Activated CD8-positive, alpha-beta T cell treated with anti-CD3 and anti-CD28 coated beads, Interleukin-2, amount 10 ng/mL, durations not matched to agents 7 days and 5 days (primary cell): ENCODE measurements at regions of chr20 and their contacts with region 1.

Region 1: GRCh38 chr20:44609511-44610312 is 27.3 kb downstream of the PKIG start:
- DNase-seq: peak; percentile 87
- ATAC-seq: peak; percentile 93
- H3K4me3 Mint-ChIP-seq: peak overlapping the region; percentile 22
- H3K27ac Mint-ChIP-seq: peak overlapping the region; percentile 92
- H3K4me1 Mint-ChIP-seq: peaks cover 21% of the 10 kb centered on the region
- H3K27me3 Mint-ChIP-seq: no peaks in the 10 kb centered on the region

Region 2: DNA sequence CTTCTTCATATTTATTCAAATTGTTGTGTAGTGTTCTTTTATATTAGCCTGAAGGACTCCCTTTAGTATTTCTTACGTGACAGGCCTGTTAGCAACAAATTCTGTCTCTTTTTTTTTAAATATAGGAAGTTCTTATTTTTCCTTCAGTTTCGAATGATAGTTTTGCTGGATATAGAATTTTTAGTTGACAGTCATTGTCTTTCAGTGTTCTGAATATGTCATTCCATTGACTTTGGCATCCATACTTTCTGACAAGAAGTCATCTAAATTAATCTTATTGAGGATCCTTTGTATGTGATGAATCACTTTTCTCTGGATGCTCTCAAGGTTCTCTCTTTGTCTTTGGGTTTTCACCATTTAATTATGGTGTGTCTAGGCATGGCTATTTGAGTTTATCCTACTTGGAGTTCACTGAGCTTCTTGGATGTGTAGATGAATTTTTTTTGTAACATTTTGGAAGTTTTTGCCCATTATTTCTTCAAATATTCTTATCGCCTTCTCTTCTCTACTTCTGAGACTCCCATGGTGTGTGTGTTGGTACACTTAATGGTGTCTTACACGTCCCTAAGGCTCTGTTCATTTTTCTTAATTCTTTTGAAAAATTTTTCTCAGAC is 800.4 kb before region 1 on chr20:
- CTCF ChIA-PET with region 1: no interaction called
- POLR2A ChIA-PET with region 1: no interaction called
- DNase-seq: no peak
- ATAC-seq: no peak
- H3K4me3 Mint-ChIP-seq: no peak overlapping the region
- H3K27ac Mint-ChIP-seq: no peak overlapping the region
- H3K4me1 Mint-ChIP-seq: no peaks in the 10 kb centered on the region
- H3K27me3 Mint-ChIP-seq: peaks cover 12% of the 10 kb centered on the region

Region 3: GRCh38 chr20:44388466-44389023 is 221.2 kb before region 1 on chr20:
- CTCF ChIA-PET with region 1: interaction called, 31 read pairs
- POLR2A ChIA-PET with region 1: no interaction called
- DNase-seq: peak; percentile 78
- ATAC-seq: peak; percentile 86
- H3K4me3 Mint-ChIP-seq: no peak overlapping the region
- H3K27ac Mint-ChIP-seq: no peak overlapping the region
- H3K4me1 Mint-ChIP-seq: peaks cover 6% of the 10 kb centered on the region
- H3K27me3 Mint-ChIP-seq: peaks cover 2% of the 10 kb centered on the region

Region 4: GRCh38 chr20:44475694-44476560 is 133.8 kb before region 1 on chr20 and contains the start of gene TTPAL:
- CTCF ChIA-PET with region 1: interaction called, 14 read pairs
- POLR2A ChIA-PET with region 1: interaction called, 3 read pairs
- DNase-seq: peak; percentile 91
- ATAC-seq: peak; percentile 100
- H3K4me3 Mint-ChIP-seq: peak within 1 kb of the TSS; percentile 94
- H3K27ac Mint-ChIP-seq: peak within 1 kb of the TSS; percentile 99
- H3K4me1 Mint-ChIP-seq: peaks cover 20% of the 10 kb centered on the region
- H3K27me3 Mint-ChIP-seq: peaks cover 2% of the 10 kb centered on the region
- total RNA-seq, gene TTPAL: 18.0 to 18.4 TPM

Region 5: DNA sequence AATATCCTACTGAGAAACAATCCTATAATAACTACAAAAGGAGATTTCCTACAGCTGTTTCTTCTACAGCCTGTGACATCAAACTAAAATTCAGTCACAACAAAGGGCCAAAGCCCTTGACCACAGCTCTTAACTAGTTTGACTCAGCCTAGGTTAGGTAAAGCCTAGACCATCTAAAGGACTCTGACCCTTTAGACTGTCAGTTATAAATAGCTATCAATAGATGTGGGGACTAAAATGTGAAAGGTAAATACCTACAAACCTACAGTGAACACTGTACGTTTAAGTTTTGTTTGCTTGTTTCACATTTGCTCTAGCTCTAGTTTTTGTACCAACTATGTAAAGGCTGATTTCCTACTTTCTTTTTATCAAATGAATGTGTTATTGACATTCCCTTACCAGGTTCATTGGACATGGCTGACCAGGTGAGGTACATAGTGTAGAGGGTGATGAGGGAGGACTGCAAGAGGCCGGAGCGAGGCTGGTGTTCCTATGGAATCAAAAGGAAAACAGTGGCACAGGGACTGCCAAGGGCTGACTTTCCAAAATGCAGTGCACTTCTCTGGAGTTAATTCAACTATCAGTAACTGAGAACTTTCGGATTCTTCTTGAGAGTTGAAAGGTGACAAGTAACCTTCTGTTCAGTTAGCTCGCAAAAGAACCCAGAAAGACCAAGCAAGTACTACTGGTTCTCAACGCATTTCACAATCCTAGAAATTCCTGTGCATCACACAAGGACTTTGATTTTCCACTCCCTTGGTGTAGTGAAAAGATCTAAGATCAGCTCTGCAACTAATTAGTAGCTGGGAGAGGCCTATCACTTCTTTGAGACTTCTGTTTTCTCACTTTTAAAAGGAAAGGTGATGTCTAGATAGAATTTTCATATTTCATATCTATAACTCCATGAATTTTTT is 105.1 kb before region 1 on chr20:
- CTCF ChIA-PET with region 1: interaction called, 13 read pairs
- POLR2A ChIA-PET with region 1: no interaction called
- DNase-seq: no peak
- ATAC-seq: no peak
- H3K4me3 Mint-ChIP-seq: no peak overlapping the region
- H3K27ac Mint-ChIP-seq: no peak overlapping the region
- H3K4me1 Mint-ChIP-seq: no peaks in the 10 kb centered on the region
- H3K27me3 Mint-ChIP-seq: no peaks in the 10 kb centered on the region

Region 6: DNA sequence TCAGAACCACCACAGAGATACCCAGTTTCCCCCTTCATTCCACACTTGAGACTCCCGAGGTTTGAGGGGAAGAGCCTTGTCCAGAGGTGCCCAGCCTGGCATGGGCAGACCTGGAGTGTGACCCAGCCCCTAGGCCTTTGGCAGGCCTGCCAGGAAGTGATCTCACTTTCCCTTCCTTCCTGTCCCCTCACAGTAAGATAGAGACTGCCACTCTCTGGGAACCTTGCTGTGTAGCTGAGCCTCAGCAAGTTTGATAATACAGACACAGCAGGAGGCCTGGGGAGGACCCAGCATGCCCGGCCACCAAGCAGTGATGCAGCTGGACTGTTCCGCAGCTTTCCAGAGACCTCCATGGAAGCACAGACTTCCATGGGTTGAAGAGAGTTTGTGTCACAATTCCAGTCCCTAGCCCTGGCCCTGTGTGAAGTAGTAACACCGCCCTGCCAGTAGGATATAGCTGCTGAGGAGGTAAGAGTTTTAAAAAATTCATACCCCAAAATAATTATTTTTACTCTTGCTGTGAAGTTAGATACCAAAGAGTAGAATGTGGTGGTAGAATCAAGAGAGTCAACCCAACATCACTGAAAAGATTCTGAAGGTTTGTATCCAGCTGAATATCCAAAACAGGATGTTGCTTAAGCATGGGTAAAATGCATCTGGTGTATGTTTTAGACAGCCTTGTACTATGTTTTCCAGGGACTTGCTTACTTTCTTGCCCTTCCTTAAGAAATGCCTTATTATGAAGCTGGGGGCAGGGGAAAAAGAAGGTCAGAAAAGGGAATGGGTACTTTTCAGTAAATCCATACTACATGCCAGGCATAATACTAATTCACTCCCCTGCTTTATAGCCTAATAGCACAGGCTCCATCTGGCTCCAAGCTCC is 11.0 kb before region 1 on chr20:
- CTCF ChIA-PET with region 1: interaction called, 36 read pairs
- POLR2A ChIA-PET with region 1: no interaction called
- DNase-seq: peak; percentile 37
- ATAC-seq: peak; percentile 82
- H3K4me3 Mint-ChIP-seq: peak overlapping the region; percentile 69
- H3K27ac Mint-ChIP-seq: peak overlapping the region; percentile 86
- H3K4me1 Mint-ChIP-seq: peaks cover 31% of the 10 kb centered on the region
- H3K27me3 Mint-ChIP-seq: no peaks in the 10 kb centered on the region

Region 7: GRCh38 chr20:44642203-44643153 is 32.8 kb after region 1 on chr20:
- CTCF ChIA-PET with region 1: interaction called, 14 read pairs
- POLR2A ChIA-PET with region 1: interaction called, 3 read pairs
- DNase-seq: peak; percentile 59
- ATAC-seq: peak; percentile 18
- H3K4me3 Mint-ChIP-seq: peak overlapping the region; percentile 57
- H3K27ac Mint-ChIP-seq: peak overlapping the region; percentile 99
- H3K4me1 Mint-ChIP-seq: peaks cover 77% of the 10 kb centered on the region
- H3K27me3 Mint-ChIP-seq: no peaks in the 10 kb centered on the region